GM12878 (cell line): ENCODE measurements at regions of chr4 and their contacts with region 1.

Region 1: DNA sequence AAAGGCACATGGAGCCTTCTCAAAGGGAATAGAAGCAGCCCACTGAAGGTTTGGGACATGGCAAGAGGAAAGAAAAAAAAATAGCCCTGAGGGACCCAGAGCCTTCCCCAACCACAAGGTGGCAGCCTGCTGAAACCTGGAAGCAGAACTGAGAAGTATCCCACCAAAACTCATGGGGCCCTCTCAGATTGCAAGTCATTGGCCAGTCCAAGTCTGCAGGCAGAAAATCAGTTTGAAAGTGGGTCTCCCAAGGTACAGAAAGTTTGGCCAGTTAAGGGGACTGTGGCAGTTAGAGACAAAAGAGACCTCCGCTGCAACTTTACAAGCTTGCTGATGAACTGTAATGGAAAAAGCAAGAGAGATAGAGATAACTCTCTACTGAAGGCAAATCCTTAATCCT is 155.8 kb downstream of the ANTXR2 start:
- DNase-seq: peak; percentile 8
- ATAC-seq: peak; percentile 92
- H3K4me3 ChIP-seq: no peak overlapping the region
- H3K27ac ChIP-seq: no peak overlapping the region
- H3K4me1 ChIP-seq: no peaks in the 10 kb centered on the region
- H3K27me3 ChIP-seq: no peaks in the 10 kb centered on the region
- CTCF ChIP-seq: peak; percentile 68 to 83 (median 71)
- EP300 ChIP-seq: no peak
- POLR2A ChIP-seq: no peak
- RAD21 ChIP-seq: peak; percentile 71

Region 2: GRCh38 chr4:79588689-79589088 is 328.6 kb before region 1 on chr4:
- CTCF ChIA-PET with region 1: no interaction called
- POLR2A ChIA-PET with region 1: no interaction called
- RAD21 ChIA-PET with region 1: no interaction called
- SMC1A ChIA-PET with region 1: no interaction called
- in situ Hi-C with region 1: no loop called
- intact Hi-C with region 1: no loop called
- DNase-seq: no peak
- ATAC-seq: no peak
- H3K4me3 ChIP-seq: no peak overlapping the region
- H3K27ac ChIP-seq: no peak overlapping the region
- H3K4me1 ChIP-seq: no peaks in the 10 kb centered on the region
- H3K27me3 ChIP-seq: no peaks in the 10 kb centered on the region; a peak in 1 of 4 replicates
- CTCF ChIP-seq: no peak
- EP300 ChIP-seq: no peak
- POLR2A ChIP-seq: no peak
- RAD21 ChIP-seq: no peak

Region 3: GRCh38 chr4:79869597-79870304 is 47.5 kb before region 1 on chr4:
- CTCF ChIA-PET with region 1: no interaction called
- POLR2A ChIA-PET with region 1: no interaction called
- RAD21 ChIA-PET with region 1: no interaction called
- SMC1A ChIA-PET with region 1: no interaction called
- in situ Hi-C with region 1: no loop called
- intact Hi-C with region 1: no loop called
- DNase-seq: no peak
- ATAC-seq: no peak
- H3K4me3 ChIP-seq: no peak overlapping the region
- H3K27ac ChIP-seq: no peak overlapping the region
- H3K4me1 ChIP-seq: no peaks in the 10 kb centered on the region
- H3K27me3 ChIP-seq: no peaks in the 10 kb centered on the region
- CTCF ChIP-seq: no peak
- EP300 ChIP-seq: no peak
- POLR2A ChIP-seq: no peak
- RAD21 ChIP-seq: no peak

Region 4: GRCh38 chr4:79906303-79906702 is 10.9 kb before region 1 on chr4:
- CTCF ChIA-PET with region 1: interaction called, 10 read pairs
- POLR2A ChIA-PET with region 1: no interaction called
- RAD21 ChIA-PET with region 1: no interaction called
- SMC1A ChIA-PET with region 1: interaction called, 3 read pairs
- in situ Hi-C with region 1: no loop called
- intact Hi-C with region 1: no loop called
- DNase-seq: no peak
- ATAC-seq: no peak
- H3K4me3 ChIP-seq: no peak overlapping the region
- H3K27ac ChIP-seq: no peak overlapping the region
- H3K4me1 ChIP-seq: no peaks in the 10 kb centered on the region
- H3K27me3 ChIP-seq: no peaks in the 10 kb centered on the region
- CTCF ChIP-seq: no peak
- EP300 ChIP-seq: no peak
- POLR2A ChIP-seq: no peak
- RAD21 ChIP-seq: no peak

Region 5: DNA sequence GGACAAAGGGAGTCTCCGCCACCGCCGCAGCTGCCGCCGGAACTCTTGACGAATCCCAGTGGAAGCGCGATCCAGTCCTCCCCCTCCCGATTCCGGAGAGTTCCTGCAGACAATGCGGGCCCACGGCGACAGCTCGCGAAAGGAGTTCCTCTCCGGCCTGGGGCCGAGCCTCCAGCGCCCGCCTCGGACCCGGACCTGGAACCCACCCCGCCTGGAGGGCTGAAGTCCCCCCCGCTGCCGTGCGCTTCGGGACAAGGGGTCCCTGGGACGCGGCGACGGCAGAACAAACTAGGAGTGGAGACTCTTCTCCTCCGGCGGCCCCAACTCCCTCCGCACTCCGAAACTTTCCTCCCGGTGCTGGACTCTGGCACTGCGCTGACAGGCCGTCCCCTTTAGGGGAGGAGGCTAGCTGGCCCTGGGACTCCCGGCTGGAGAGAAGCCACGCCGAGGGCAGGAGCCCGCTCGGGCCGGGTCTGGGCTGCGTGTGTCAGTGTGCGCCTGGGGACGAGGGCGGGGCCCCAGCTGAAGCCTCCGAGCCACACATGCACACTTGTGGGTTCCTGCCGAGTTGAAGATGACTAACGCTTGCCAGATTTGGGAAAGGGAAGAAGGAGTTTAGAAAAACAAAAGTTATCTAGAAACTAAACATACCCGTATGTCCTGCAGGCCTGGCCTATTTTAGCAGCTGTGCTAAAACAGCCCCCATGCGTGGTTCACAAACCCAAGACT is 155.7 kb after region 1 on chr4 and contains the start of gene ANTXR2:
- CTCF ChIA-PET with region 1: interaction called, 4 read pairs
- POLR2A ChIA-PET with region 1: no interaction called
- RAD21 ChIA-PET with region 1: interaction called, 3 read pairs
- SMC1A ChIA-PET with region 1: interaction called, 4 read pairs
- in situ Hi-C with region 1: no loop called
- intact Hi-C with region 1: loop called (anchors 5 kb)
- DNase-seq: peak; percentile 41
- ATAC-seq: peak; percentile 81
- H3K4me3 ChIP-seq: peak within 1 kb of the TSS; percentile 95
- H3K27ac ChIP-seq: peak within 1 kb of the TSS; percentile 70
- H3K4me1 ChIP-seq: peaks cover 48% of the 10 kb centered on the region
- H3K27me3 ChIP-seq: no peaks in the 10 kb centered on the region
- CTCF ChIP-seq: no peak
- EP300 ChIP-seq: 0 out of 4 replicates have a peak, but pooled peaks of 1 of the 2 experiments have one; percentile 7
- POLR2A ChIP-seq: peak; percentile 69
- RAD21 ChIP-seq: no peak
- polyA plus RNA-seq, gene ANTXR2: 1.4 to 1.5 TPM